ENCODE measurements at regions of chr21 and their contacts with region 1.

Region 1: GRCh38 chr21:33360881-33361602 is 36.3 kb downstream of the IFNAR1 start:
- DNase-seq: peak; percentile 65
- H3K4me3 ChIP-seq: peak overlapping the region in 2 of 3 experiments; percentile 1 to 8
- H3K27ac ChIP-seq: no peak overlapping the region
- H3K4me1 ChIP-seq: peaks cover 17% of the 10 kb centered on the region
- H3K27me3 ChIP-seq: no peaks in the 10 kb centered on the region
- CTCF ChIP-seq: peak; percentile 89 to 98

Region 2: DNA sequence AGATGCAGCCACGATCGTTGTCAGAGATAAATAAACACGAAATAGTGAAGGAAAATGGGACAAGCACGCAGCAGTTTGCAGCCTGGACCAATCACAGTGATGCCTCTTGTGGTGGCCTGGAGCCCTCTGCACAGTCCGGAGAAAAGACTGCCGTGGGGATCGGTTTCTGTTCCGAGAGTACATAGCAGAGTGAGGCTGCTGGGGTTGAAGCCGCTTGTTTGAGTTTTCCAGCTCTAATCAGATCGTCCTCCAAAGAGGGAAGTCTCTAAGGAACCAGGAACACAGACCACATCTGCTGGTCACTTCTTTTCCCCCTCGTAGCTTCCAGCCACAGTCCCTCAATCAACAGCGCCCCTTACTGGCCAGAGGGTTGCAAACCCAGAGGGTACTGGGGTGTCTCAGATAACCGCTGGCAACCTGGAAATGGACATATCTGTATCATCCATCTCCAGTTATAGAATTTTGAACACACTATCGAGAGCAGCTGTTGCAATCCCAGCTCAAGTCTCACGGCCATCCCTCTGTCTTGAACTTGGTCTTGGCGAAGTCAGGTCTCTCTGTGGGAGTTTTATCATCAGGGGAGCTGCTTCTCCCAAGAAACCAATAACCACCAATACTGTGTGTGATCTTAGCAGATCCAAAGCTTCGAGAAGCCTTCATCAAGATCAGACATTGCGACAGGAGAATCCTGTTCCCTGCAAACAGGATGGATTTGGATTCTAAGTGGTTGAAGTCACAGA is 233.7 kb before region 1 on chr21:
- CTCF ChIA-PET with region 1: no interaction called
- dilution Hi-C with region 1: no loop called
- in situ Hi-C with region 1: no loop called
- intact Hi-C with region 1: no loop called
- DNase-seq: peak; percentile 44
- H3K4me3 ChIP-seq: no peak overlapping the region
- H3K27ac ChIP-seq: no peak overlapping the region
- H3K4me1 ChIP-seq: no peaks in the 10 kb centered on the region
- H3K27me3 ChIP-seq: no peaks in the 10 kb centered on the region
- CTCF ChIP-seq: peak; percentile 75 to 86

Region 3: DNA sequence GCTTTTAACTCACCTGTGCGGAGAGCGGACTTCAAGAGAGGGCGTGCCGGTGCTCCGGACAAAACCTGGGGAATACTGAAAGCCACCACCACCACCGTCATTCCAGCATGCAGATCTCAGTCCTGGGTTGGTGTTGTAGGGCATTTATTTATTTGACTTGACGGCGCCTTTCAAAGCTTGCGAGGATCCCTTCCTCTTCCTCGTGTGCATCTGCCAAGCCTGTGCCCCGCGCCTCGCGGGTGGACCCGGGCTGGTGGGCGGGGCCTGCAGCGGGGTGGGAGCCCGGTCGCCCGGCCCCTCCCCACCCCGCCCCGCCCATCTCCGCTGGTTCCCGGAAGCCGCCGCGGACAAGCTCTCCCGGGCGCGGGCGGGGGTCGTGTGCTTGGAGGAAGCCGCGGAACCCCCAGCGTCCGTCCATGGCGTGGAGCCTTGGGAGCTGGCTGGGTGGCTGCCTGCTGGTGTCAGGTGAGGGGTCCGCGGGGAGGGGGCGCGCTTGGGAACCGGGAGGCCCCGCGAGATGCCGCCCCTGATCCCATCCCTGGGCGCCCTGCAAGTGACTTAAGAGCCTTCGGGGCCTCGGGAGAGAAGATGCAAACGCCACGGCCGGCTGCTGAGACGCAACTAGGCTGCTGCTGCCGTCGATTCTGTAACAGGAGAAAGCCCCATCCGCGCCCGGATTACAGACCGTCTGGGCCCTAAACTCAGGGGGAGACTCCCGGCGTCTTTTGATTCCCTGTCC is 94.8 kb before region 1 on chr21 and contains the start of gene IL10RB:
- CTCF ChIA-PET with region 1: no interaction called
- dilution Hi-C with region 1: no loop called
- in situ Hi-C with region 1: no loop called
- intact Hi-C with region 1: loop called (anchors 2 kb)
- DNase-seq: peak; percentile 56
- H3K4me3 ChIP-seq: peak within 1 kb of the TSS; percentile 87 to 90 (median 87)
- H3K27ac ChIP-seq: peak within 1 kb of the TSS; percentile 59
- H3K4me1 ChIP-seq: peaks cover 18% of the 10 kb centered on the region
- H3K27me3 ChIP-seq: no peaks in the 10 kb centered on the region
- CTCF ChIP-seq: no peak
- total RNA-seq, gene IL10RB: 14.3 to 18.9 TPM

Region 4: GRCh38 chr21:33299181-33299752 is 61.8 kb before region 1 on chr21:
- CTCF ChIA-PET with region 1: interaction called, 20 read pairs
- dilution Hi-C with region 1: no loop called
- in situ Hi-C with region 1: no loop called
- intact Hi-C with region 1: no loop called
- DNase-seq: peak; percentile 52
- H3K4me3 ChIP-seq: no peak overlapping the region
- H3K27ac ChIP-seq: peak overlapping the region; percentile 45
- H3K4me1 ChIP-seq: peaks cover 15% of the 10 kb centered on the region
- H3K27me3 ChIP-seq: no peaks in the 10 kb centered on the region
- CTCF ChIP-seq: peak; percentile 45 to 46

Region 5: GRCh38 chr21:33380483-33380998 is 19.5 kb after region 1 on chr21:
- CTCF ChIA-PET with region 1: no interaction called
- dilution Hi-C with region 1: no loop called
- in situ Hi-C with region 1: no loop called
- intact Hi-C with region 1: loop called (anchors 1 kb)
- DNase-seq: peak; percentile 98
- H3K4me3 ChIP-seq: no peak overlapping the region
- H3K27ac ChIP-seq: peak overlapping the region; percentile 95
- H3K4me1 ChIP-seq: peaks cover 48% of the 10 kb centered on the region
- H3K27me3 ChIP-seq: no peaks in the 10 kb centered on the region
- CTCF ChIP-seq: no peak

Region 6: DNA sequence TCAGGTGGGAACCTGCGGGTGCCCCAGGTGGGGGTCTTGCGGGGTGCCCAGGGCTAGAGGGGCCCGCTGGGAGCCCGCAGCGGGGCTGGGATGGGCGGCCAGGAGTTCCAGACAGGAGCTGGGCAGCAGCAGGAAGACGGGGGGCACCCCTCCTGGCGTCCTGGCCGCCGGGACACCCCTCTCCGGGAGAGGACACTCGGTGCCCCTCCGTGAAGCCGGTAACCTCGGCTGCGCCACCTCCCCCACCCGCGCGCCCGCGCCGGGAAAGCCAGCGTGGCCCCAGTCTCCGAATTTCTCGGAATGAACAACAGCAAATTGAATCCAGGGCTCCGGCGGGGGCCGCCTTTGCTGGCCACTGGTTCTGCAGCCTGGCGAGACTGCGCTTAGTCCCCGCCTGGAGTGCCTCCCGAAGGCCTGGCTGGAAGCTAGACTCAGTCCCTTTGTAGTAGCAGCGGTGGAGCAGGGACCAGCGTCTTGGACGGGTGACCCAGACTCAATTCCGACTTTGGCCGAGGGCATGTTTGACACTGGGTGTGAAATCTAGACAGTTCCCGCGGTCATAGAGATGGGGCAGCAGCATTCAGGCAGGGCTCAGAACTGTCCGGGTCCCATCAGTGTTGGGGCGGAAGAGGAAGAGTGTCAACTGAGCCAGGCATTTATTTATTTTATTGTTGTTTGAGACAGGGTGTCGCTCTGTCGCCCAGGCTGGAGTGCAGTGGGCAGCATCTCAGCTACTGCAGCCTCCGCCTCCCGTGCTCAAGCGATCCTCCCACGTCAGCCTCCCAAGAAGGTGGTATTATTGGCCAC is 42.9 kb after region 1 on chr21:
- CTCF ChIA-PET with region 1: interaction called, 4 read pairs
- dilution Hi-C with region 1: no loop called
- in situ Hi-C with region 1: no loop called
- intact Hi-C with region 1: loop called (anchors 1 kb)
- DNase-seq: peak; percentile 49
- H3K4me3 ChIP-seq: peak overlapping the region; percentile 63 to 97 (median 83)
- H3K27ac ChIP-seq: peak overlapping the region; percentile 89
- H3K4me1 ChIP-seq: peaks cover 17% of the 10 kb centered on the region
- H3K27me3 ChIP-seq: no peaks in the 10 kb centered on the region
- CTCF ChIP-seq: no peak

Region 7: DNA sequence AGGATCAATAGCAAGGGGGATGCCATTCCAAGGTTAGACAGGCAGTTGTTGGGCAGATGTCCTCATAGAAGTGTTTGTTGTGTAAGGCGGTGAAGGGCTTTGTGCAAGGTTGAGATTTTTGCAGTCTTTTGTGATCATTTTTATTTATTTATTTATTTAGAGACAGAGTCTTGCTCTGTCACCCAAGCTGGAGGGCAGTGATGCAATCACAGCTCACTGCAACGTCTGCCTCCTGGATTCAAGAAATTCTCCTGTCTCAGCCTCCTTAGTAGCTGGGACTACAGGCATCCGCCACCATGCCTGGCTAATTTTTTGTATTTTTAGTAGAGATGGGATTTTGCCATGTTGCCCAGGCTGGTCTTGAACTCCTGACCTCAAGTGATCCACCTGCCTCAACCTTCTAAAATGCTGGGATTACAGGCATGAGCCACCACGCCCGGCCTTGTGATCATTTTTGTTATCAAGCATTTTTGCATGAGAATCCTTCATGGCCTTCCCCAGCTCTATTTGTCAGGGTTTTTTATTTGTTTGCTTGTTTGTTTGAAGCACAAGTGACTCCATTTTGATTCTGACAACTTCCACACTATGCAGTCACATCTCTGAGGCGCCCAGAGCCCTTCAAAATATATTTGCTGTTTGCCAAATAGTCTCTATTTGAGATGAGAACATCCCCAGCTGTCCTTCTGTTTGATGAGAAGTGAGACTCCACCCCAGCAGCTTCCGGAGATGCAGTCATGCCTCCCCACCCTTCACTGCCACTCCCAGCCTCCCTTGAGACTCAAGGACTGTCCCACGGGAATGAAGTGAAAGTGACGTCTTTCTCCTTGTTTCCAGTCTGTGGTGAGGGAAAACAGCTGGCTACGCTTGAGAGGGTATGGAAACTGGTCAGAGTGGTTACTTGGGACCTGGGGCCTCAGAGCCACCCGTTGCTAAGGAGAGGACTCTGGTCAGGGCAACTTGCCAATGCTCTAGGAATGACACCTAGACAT is 80.7 kb after region 1 on chr21:
- CTCF ChIA-PET with region 1: interaction called, 13 read pairs
- dilution Hi-C with region 1: no loop called
- in situ Hi-C with region 1: no loop called
- intact Hi-C with region 1: loop called (anchors 1 kb)
- DNase-seq: peak; percentile 96
- H3K4me3 ChIP-seq: no peak overlapping the region
- H3K27ac ChIP-seq: peak overlapping the region; percentile 70
- H3K4me1 ChIP-seq: peaks cover 19% of the 10 kb centered on the region
- H3K27me3 ChIP-seq: no peaks in the 10 kb centered on the region
- CTCF ChIP-seq: no peak